ENCODE measurements at regions of chr14 and their contacts with region 1.

Region 1: DNA sequence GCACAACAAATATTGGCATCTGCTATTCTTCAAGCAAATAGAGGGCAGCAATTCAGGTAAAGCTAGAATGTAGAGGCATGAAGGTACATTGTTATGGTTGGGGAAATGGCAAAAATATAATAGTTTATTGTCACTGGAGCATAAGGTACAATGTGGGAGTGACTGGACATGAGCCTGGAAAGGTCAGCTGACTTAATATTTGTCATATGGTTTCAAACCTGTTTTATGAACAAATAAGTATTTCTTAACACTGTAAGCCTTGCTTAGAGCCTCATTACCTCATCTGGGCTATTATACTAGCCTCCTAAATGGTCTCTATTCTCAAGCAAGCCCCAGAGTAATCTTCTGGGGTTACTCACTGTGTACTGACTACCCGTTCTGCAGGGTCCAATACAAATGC is 33.7 kb downstream of the FAM177A1 start:
- DNase-seq: no peak
- ATAC-seq: no peak
- H3K4me3 ChIP-seq: no peak overlapping the region
- H3K4me3 Mint-ChIP-seq: no peak overlapping the region
- H3K27ac ChIP-seq: no peak overlapping the region
- H3K27ac Mint-ChIP-seq: no peak overlapping the region
- H3K4me1 ChIP-seq: no peaks in the 10 kb centered on the region
- H3K4me1 Mint-ChIP-seq: no peaks in the 10 kb centered on the region
- H3K27me3 ChIP-seq: no peaks in the 10 kb centered on the region
- H3K27me3 Mint-ChIP-seq: no peaks in the 10 kb centered on the region
- CTCF ChIP-seq: no peak

Region 2: GRCh38 chr14:34676516-34677222 is 403.1 kb before region 1 on chr14:
- CTCF ChIA-PET with region 1: no interaction called
- POLR2A ChIA-PET with region 1: no interaction called
- intact Hi-C with region 1: loop called in 1 of 2 experiments (anchors 5 kb)
- DNase-seq: no peak
- ATAC-seq: no peak
- H3K4me3 ChIP-seq: no peak overlapping the region
- H3K4me3 Mint-ChIP-seq: no peak overlapping the region
- H3K27ac ChIP-seq: no peak overlapping the region
- H3K27ac Mint-ChIP-seq: no peak overlapping the region
- H3K4me1 ChIP-seq: no peaks in the 10 kb centered on the region
- H3K4me1 Mint-ChIP-seq: no peaks in the 10 kb centered on the region
- H3K27me3 ChIP-seq: no peaks in the 10 kb centered on the region
- H3K27me3 Mint-ChIP-seq: no peaks in the 10 kb centered on the region
- CTCF ChIP-seq: no peak

Region 3: DNA sequence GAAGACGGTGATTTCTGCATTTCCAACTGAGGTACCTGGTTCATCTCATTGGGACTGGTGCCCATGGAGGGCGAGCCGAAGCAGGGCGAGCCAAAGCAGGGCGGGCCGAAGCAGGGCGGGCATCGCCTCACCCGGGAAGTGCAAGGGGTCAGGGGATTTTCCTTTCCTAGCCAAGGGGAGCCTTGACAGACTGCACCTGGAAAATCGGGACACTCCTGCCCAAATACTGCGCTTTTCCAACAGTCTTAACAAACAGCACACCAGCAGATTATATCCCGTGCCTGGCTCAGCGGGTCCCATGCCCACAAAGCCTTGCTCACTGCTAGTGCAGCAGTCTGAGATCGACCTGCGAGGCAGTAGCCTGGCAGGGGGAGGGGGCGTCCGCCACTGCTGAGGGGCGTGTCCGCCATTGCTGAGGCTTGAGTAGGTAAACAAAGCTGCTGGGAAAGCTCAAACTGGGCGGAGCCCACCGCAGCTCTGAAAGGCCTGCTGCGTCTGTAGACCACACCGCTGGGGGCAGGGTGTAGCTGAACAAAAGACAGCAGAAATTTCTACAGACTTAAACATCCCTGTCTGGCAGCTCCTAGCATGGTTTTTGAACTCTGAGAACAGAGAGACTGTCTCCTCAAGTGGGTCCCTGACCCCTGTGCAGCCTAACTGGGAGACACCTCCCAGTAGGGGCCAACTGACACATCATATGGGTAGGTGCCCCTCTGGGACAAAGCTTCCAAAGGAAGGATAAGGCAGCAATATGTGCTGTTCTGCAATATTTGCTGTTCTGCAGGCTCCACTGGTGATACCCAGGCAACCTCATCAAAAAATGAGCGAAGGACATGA is 281.8 kb before region 1 on chr14:
- CTCF ChIA-PET with region 1: no interaction called
- POLR2A ChIA-PET with region 1: no interaction called
- intact Hi-C with region 1: no loop called
- DNase-seq: peak in 2 of 9 experiments; percentile 18 to 19
- ATAC-seq: no peak
- H3K4me3 ChIP-seq: no peak overlapping the region
- H3K4me3 Mint-ChIP-seq: no peak overlapping the region
- H3K27ac ChIP-seq: no peak overlapping the region
- H3K27ac Mint-ChIP-seq: no peak overlapping the region
- H3K4me1 ChIP-seq: no peaks in the 10 kb centered on the region
- H3K4me1 Mint-ChIP-seq: no peaks in the 10 kb centered on the region
- H3K27me3 ChIP-seq: no peaks in the 10 kb centered on the region
- H3K27me3 Mint-ChIP-seq: no peaks in the 10 kb centered on the region
- CTCF ChIP-seq: no peak

Region 4: GRCh38 chr14:35292051-35292769 is 212.5 kb after region 1 on chr14 and contains the start of gene PSMA6:
- CTCF ChIA-PET with region 1: no interaction called
- POLR2A ChIA-PET with region 1: no interaction called
- intact Hi-C with region 1: no loop called
- DNase-seq: peak; percentile 98 to 100 (median 99)
- ATAC-seq: peak; percentile 97
- H3K4me3 ChIP-seq: peak within 1 kb of the TSS; percentile 79 to 85
- H3K4me3 Mint-ChIP-seq: peak within 1 kb of the TSS; percentile 98
- H3K27ac ChIP-seq: peak within 1 kb of the TSS; percentile 82 to 91
- H3K27ac Mint-ChIP-seq: peak within 1 kb of the TSS; percentile 98
- H3K4me1 ChIP-seq: peaks cover 31% of the 10 kb centered on the region
- H3K4me1 Mint-ChIP-seq: peaks cover 48% of the 10 kb centered on the region
- H3K27me3 ChIP-seq: no peaks in the 10 kb centered on the region
- H3K27me3 Mint-ChIP-seq: no peaks in the 10 kb centered on the region
- CTCF ChIP-seq: no peak
- total RNA-seq, gene PSMA6: 72.3 to 78.9 TPM

Measured in CD8-positive, alpha-beta T cell (primary cell).